Posterior vena cava (tissue), 2 donors: ENCODE measurements at regions of chr16 and their contacts with region 1.

Region 1: GRCh38 chr16:68229431-68230198 is 6.3 kb downstream of the ESRP2 start:
- DNase-seq: no peak

Region 2: GRCh38 chr16:68085259-68086071 is 144.2 kb before region 1 on chr16 and contains the start of gene NFATC3:
- intact Hi-C with region 1: loop called (anchors 5 to 10 kb)
- DNase-seq: peak; percentile 100
- total RNA-seq, gene NFATC3: 28.0 to 30.8 TPM

Region 3: DNA sequence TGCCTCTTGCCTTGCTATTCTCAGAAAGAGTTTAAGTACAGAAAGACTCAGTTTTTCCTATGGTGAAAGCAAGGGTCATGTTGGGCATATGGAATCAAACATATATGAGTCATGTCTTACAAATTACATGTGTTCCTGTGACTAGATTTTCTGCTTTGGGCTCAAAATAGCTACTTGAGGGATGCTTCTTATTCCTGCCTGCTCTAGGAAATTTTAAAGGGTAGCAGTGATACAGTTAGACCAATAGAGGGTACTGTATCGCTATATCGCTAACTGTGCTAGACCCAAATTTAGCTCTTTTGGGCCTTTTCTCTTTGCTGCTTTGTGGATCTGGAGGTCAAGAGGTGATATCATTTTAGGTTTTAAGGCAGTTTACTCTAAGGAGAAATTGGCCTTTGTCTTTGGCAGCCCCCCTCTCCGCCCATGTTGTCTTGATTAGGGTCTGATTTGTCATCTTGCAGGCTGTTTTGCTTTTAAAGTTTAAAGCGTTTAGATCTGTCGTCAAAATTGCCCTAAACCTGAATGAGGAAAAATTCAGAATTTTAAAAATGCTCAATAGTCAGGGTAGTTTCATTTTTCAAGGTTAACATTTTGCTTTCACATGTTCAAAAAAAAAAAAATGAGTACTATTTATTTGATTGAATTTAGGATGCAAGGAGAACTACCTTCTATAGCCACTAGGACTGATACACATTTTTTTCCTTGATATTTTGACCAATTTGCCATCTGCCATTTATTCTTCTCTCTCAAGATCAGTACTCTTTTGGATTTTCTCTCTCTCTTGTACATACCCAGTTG is 135.6 kb before region 1 on chr16:
- intact Hi-C with region 1: loop called (anchors 5 to 10 kb)
- DNase-seq: no peak